MCF 10A (cell line): ENCODE measurements at regions of chr5 and their contacts with region 1.

Region 1: GRCh38 chr5:144004146-144004545 is 166.3 kb downstream of the YIPF5 start:
- DNase-seq: peak; percentile 40
- H3K4me3 Mint-ChIP-seq: no peak overlapping the region
- H3K27ac Mint-ChIP-seq: peak overlapping the region; percentile 30
- H3K4me1 Mint-ChIP-seq: peaks cover 13% of the 10 kb centered on the region
- H3K27me3 Mint-ChIP-seq: no peaks in the 10 kb centered on the region
- CTCF ChIP-seq: no peak

Region 2: GRCh38 chr5:143931476-143931875 is 72.7 kb before region 1 on chr5:
- CTCF ChIA-PET with region 1: no interaction called
- POLR2A ChIA-PET with region 1: no interaction called
- intact Hi-C with region 1: no loop called
- DNase-seq: peak; percentile 70
- H3K4me3 Mint-ChIP-seq: no peak overlapping the region
- H3K27ac Mint-ChIP-seq: peak overlapping the region; percentile 96
- H3K4me1 Mint-ChIP-seq: peaks cover 29% of the 10 kb centered on the region
- H3K27me3 Mint-ChIP-seq: no peaks in the 10 kb centered on the region
- CTCF ChIP-seq: no peak

Region 3: DNA sequence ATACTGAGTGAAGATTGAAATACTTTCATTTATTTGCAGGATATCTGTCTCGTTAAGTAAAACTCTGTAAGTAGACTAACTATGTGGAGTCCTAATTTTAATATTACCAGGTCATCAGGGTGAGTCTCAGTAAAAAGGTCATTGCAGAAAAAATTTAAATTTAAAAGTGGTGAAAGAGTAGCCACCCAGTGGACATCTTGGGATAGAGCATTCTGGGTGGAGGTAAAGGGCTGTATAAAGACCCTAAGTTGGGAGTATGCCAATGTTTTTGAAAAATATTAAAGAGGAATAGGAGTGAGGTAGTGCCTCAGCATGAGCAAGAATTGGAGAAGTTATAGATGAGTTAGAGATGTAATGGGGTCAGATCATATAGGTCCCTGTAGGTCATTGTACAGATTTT is 46.7 kb before region 1 on chr5:
- CTCF ChIA-PET with region 1: no interaction called
- POLR2A ChIA-PET with region 1: no interaction called
- intact Hi-C with region 1: loop called (anchors 1 kb)
- DNase-seq: no peak
- H3K4me3 Mint-ChIP-seq: no peak overlapping the region
- H3K27ac Mint-ChIP-seq: no peak overlapping the region
- H3K4me1 Mint-ChIP-seq: no peaks in the 10 kb centered on the region
- H3K27me3 Mint-ChIP-seq: no peaks in the 10 kb centered on the region
- CTCF ChIP-seq: peak; percentile 51

Region 4: GRCh38 chr5:143985832-143986485 is 18.2 kb before region 1 on chr5:
- CTCF ChIA-PET with region 1: interaction called, 13 read pairs
- POLR2A ChIA-PET with region 1: interaction called, 3 read pairs
- intact Hi-C with region 1: no loop called
- DNase-seq: peak; percentile 77
- H3K4me3 Mint-ChIP-seq: no peak overlapping the region
- H3K27ac Mint-ChIP-seq: peak overlapping the region; percentile 22
- H3K4me1 Mint-ChIP-seq: peaks cover 34% of the 10 kb centered on the region
- H3K27me3 Mint-ChIP-seq: no peaks in the 10 kb centered on the region
- CTCF ChIP-seq: no peak

Region 5: DNA sequence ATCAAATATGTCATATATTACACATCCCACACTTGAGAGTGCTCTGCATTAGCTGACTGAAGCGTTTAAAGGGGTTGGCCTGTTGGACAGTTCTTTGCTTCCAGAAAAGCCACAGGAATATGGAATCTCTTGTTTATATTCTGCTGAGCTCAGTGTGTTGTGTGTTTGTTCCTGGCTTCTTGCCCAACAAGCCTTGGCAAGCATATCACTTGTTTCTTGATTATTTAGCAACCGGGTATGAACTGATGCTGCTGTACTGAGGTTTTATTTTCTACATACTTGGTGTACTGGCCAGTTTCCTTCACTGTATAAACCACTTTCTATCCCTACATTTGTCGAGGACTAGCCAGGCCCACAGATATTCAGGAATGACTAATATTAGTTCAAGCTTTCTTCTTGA is 545.4 kb after region 1 on chr5:
- CTCF ChIA-PET with region 1: no interaction called
- POLR2A ChIA-PET with region 1: no interaction called
- intact Hi-C with region 1: no loop called
- DNase-seq: peak; percentile 91
- H3K4me3 Mint-ChIP-seq: no peak overlapping the region
- H3K27ac Mint-ChIP-seq: no peak overlapping the region
- H3K4me1 Mint-ChIP-seq: peaks cover 6% of the 10 kb centered on the region
- H3K27me3 Mint-ChIP-seq: no peaks in the 10 kb centered on the region
- CTCF ChIP-seq: no peak